Activated CD4-positive, alpha-beta memory T cell treated with anti-CD3 and anti-CD28 coated beads for 36 hours (primary cell): ENCODE measurements at regions of chr1 and their contacts with region 1.

Region 1: DNA sequence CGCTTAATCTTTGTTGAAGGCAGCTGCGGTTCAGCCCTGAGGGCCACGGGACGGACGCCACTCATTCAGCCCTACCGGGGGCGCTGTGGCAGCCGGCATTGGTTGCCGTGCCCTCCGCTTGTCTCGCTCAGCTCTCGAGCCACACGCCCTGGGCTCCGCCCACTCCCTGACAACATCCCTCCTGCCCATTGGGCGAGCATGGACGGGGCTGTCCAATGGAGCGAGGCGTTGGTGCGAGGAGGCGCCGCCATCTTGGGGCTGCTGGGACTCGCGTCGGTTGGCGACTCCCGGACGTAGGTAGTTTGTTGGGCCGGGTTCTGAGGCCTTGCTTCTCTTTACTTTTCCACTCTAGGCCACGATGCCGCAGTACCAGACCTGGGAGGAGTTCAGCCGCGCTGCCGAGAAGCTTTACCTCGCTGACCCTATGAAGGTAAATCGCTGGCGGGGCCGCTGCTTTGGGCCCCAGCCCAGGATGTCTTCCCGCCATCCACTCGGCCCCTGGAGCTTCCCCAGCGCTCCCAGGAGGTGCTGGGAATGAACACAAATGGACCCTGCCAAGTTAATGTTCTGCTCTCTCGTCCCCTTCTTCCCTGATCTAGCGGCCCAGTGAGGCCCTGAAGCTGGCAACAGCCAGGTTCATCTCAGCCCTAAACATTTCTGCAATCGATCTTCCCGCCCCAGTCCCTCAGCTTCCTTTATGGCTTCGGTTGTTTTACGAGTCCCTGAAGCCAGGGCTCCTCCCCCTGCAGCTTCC is at the start of gene SRP9:
- DNase-seq: peak; percentile 99
- H3K4me3 Mint-ChIP-seq: no peak within 1 kb of the TSS
- H3K27ac Mint-ChIP-seq: no peak within 1 kb of the TSS
- H3K4me1 Mint-ChIP-seq: peaks cover 25% of the 10 kb centered on the region
- H3K27me3 Mint-ChIP-seq: no peaks in the 10 kb centered on the region
- total RNA-seq, gene SRP9: 294 to 314 TPM

Region 2: DNA sequence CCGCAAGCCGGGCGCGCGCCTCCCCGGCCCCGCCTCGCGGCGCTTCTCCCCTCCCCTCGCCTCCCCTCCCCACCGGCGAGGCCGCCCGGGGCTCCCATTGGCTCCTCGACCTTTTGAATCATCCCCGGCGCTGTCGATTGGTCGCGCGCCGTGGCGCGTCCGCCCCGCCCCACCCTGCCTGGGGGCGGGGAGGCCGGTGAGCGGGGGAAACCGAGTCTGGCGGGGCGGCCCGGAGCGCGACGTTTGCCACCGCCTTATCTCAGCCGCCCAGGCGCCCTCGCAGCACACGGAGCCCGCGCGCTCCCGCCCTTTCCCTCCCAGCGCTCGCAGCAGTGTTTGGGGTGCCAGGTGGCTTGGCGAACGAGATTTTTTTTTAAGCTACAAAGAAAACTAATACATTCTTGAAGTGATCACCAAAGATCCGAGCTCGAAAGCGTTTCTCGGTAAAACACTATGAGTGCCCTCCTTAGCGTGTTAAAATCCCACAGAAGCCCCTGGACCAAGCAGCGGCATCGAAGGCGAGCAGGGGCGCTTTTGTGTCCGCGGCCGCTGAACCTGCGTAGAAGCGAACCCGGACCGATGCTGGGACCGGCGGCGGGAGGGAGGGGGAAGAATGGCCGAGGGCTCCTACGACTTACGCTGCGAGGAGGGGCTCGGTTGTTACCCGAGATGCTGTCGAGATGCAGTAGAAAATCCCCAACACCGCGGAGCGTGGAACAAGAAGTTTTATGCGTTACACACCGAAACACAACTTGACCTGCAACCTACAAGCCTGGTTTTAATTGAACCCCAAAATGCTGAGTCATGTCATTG is 349.5 kb before region 1 on chr1:
- CTCF ChIA-PET with region 1: interaction called, 4 read pairs
- POLR2A ChIA-PET with region 1: interaction called, 8 read pairs
- intact Hi-C with region 1: loop called (anchors 5 kb)
- DNase-seq: peak; percentile 95
- H3K4me3 Mint-ChIP-seq: peak overlapping the region; percentile 89
- H3K27ac Mint-ChIP-seq: peak overlapping the region; percentile 97
- H3K4me1 Mint-ChIP-seq: peaks cover 44% of the 10 kb centered on the region
- H3K27me3 Mint-ChIP-seq: no peaks in the 10 kb centered on the region

Region 3: GRCh38 chr1:225480825-225481434 is 296.8 kb before region 1 on chr1:
- CTCF ChIA-PET with region 1: interaction called, 32 read pairs
- POLR2A ChIA-PET with region 1: interaction called, 4 read pairs
- intact Hi-C with region 1: no loop called
- DNase-seq: peak; percentile 70
- H3K4me3 Mint-ChIP-seq: no peak overlapping the region
- H3K27ac Mint-ChIP-seq: no peak overlapping the region
- H3K4me1 Mint-ChIP-seq: peaks cover 23% of the 10 kb centered on the region
- H3K27me3 Mint-ChIP-seq: no peaks in the 10 kb centered on the region

Region 4: DNA sequence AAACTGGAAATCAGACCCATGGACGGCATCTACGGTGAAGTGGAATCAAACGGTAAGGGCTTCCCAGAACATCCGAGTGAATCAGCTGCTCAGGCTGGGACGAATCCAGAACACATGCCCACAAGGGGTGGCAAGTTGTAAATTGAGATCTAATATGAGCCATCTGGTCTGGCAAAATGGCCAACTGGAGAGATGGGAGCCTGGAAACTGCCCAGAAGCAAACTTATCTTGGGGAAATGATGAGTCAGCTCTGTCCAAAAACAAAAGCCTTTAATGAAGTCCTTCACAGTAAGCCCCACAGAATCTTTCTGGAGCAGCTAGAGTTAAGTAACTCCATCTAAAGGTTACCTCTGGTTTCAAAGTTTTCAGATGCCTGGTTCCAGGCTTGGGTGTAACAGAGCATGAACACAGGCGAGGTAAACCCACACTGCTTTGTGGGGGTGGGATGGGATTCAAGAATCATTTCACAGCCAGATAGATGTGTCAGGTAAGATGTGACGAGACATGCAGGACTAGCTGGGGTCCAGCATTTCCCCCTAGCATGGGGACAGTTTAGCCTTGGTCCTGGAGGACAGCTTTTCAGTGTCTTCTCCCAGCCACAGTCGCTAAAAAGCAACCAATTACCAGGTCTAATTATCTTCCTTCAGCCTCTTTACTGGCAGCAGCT is 10.7 kb before region 1 on chr1:
- CTCF ChIA-PET with region 1: interaction called, 13 read pairs
- POLR2A ChIA-PET with region 1: interaction called, 3 read pairs
- intact Hi-C with region 1: no loop called
- DNase-seq: no peak
- H3K4me3 Mint-ChIP-seq: no peak overlapping the region
- H3K27ac Mint-ChIP-seq: no peak overlapping the region
- H3K4me1 Mint-ChIP-seq: no peaks in the 10 kb centered on the region
- H3K27me3 Mint-ChIP-seq: peaks cover 8% of the 10 kb centered on the region

Region 5: DNA sequence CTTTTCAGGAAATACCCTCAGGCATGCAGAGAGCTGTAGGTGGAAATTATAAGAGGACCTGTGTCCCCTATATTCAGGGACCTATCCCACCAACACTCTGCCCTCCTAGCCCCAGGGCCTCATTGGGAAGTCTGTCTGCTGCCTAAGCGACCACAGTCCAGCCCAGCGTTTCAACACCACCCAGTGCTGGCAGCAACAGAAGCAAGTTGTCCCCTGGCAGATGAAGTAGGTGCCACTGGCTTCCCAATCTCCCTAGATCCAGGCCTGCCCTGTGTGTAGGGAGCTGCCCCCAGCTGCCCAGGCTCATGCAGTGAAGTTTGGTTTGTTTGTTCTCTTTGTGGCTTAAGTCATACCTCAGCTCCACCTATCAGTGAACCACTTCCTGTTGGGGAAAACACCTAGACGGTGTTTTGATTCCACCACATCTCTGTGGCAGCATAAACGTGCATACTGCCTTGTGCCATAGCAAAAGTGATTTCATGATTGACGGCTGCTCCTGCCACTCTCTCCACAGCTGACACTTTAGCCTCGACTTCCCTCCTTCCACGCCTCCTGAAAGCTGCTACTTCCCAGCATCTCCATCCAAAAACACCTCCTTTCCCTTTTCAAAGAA is 119.3 kb after region 1 on chr1:
- CTCF ChIA-PET with region 1: interaction called, 4 read pairs
- POLR2A ChIA-PET with region 1: interaction called, 4 read pairs
- intact Hi-C with region 1: loop called (anchors 5 kb)
- DNase-seq: peak; percentile 83
- H3K4me3 Mint-ChIP-seq: peak overlapping the region; percentile 54
- H3K27ac Mint-ChIP-seq: peak overlapping the region; percentile 85
- H3K4me1 Mint-ChIP-seq: peaks cover 37% of the 10 kb centered on the region
- H3K27me3 Mint-ChIP-seq: no peaks in the 10 kb centered on the region

Region 6: GRCh38 chr1:225977937-225978748 is 200.4 kb after region 1 on chr1:
- CTCF ChIA-PET with region 1: interaction called, 8 read pairs
- POLR2A ChIA-PET with region 1: no interaction called
- intact Hi-C with region 1: loop called (anchors 2 kb)
- DNase-seq: no peak
- H3K4me3 Mint-ChIP-seq: no peak overlapping the region
- H3K27ac Mint-ChIP-seq: no peak overlapping the region
- H3K4me1 Mint-ChIP-seq: peaks cover 7% of the 10 kb centered on the region
- H3K27me3 Mint-ChIP-seq: no peaks in the 10 kb centered on the region